Right lobe of liver (tissue), 6 donors: ENCODE measurements at regions of chr6 and their contacts with region 1.

Region 1: DNA sequence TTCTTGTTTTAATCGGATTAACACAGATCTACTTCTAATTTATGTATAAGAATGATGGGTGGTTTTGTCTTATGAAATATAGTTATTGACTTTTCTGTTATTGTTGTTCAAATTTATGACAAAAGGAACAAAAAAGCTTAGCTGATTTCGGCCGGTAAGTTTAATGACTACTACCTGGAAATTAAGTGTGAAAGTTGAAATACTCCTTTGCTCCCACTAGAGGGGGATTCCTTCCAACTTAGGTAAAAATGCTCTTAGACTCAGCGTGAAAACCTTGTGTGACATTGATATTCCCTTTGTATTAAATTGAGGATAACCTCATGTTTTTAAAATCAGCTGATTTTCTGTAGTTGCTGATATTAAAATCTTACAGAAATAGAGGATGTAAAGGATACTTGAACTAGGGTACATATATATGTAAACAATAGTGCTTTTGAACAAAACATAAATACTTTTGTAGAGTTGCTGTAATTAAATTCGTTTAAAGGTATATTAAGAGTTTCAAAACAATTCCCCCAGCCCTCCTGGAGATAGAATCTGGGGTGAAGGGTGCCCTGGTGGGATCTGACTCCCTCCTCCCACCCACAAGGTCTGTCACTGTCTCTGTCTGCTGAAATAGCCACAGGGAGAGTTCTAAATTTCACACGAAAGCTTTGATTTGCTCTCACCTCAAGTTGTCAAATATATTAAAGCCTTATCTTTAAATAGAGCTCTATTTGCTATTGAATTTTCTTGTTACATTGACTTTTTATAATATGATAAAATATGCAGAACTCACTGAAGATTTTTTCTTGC is 257.5 kb downstream of the ARID1B start:
- DNase-seq: no peak
- ATAC-seq: peak; percentile 80 to 84 (median 84)
- H3K4me3 ChIP-seq: no peak overlapping the region
- H3K27ac ChIP-seq: peak overlapping the region in 2 of 3 donors; percentile 62 to 73
- H3K4me1 ChIP-seq: peaks cover 0 to 15% (median 6%) of the 10 kb centered on the region in 4 donors
- H3K27me3 ChIP-seq: no peaks in the 10 kb centered on the region
- CTCF ChIP-seq: peak; percentile 64 to 69 (median 66)
- POLR2A ChIP-seq: no peak

Region 2: GRCh38 chr6:156866220-156867015 is 168.2 kb before region 1 on chr6:
- intact Hi-C with region 1: no loop called
- DNase-seq: no peak
- ATAC-seq: peak; percentile 38 to 52 (median 41)
- H3K4me3 ChIP-seq: no peak overlapping the region
- H3K27ac ChIP-seq: no peak overlapping the region
- H3K4me1 ChIP-seq: no peaks in the 10 kb centered on the region
- H3K27me3 ChIP-seq: no peaks in the 10 kb centered on the region
- CTCF ChIP-seq: no peak
- POLR2A ChIP-seq: no peak

Region 3: GRCh38 chr6:156925718-156926615 is 108.7 kb before region 1 on chr6:
- intact Hi-C with region 1: no loop called
- DNase-seq: no peak
- ATAC-seq: no peak
- H3K4me3 ChIP-seq: no peak overlapping the region
- H3K27ac ChIP-seq: no peak overlapping the region
- H3K4me1 ChIP-seq: peaks cover 0 to 4% (median 0%) of the 10 kb centered on the region in 4 donors
- H3K27me3 ChIP-seq: no peaks in the 10 kb centered on the region
- CTCF ChIP-seq: no peak
- POLR2A ChIP-seq: no peak

Region 4: GRCh38 chr6:157184202-157185020 is 149.8 kb after region 1 on chr6:
- intact Hi-C with region 1: loop called in 1 of 2 experiments (anchors 10 kb)
- DNase-seq: peak; percentile 78 to 85 (median 84)
- ATAC-seq: peak; percentile 93 to 97 (median 96)
- H3K4me3 ChIP-seq: no peak overlapping the region
- H3K27ac ChIP-seq: no peak overlapping the region
- H3K4me1 ChIP-seq: peaks cover 0 to 21% (median 7%) of the 10 kb centered on the region in 4 donors
- H3K27me3 ChIP-seq: no peaks in the 10 kb centered on the region
- CTCF ChIP-seq: peak; percentile 91 to 94 (median 92)
- POLR2A ChIP-seq: no peak